ENCODE measurements at regions of chr6 and their contacts with region 1.

Region 1: DNA sequence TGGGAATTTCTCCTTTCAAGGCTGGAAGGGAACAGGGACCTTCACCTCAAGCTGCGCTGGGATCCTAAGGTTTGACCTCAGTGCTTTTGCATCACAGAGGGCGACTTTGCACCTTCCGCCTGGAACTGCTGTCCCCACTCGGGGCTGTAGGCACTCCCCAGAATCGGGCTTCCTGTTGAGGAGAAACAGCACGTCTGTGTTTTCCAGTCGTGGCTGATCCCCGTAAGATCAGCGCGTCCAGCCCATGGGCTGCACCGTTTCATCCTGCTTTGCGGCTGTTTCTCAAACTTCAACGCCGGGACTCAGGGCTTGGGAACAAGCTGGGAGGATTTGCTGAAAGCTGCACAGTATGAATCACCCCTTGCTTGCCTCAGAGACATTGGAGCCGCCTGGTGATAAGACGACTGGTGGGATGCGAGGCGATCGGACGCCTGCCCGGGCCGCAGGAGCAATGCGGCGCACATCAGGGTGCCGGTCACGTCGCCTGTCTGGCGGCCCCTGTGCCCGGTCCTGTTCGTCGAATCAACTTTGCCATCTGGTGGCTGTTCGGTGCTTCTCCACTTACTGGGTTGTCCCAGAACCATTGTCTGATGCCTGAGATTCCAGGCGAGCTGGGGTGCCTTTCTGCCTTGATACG is 53.6 kb upstream of the FRMD1 start:
- DNase-seq: peak; percentile 41 to 87 (median 84)
- H3K4me3 ChIP-seq: peak overlapping the region in 58 of 59 donors; percentile 0 to 69 (median 44)
- H3K27ac ChIP-seq: peak overlapping the region in 20 of 59 donors; percentile 3 to 77 (median 41)
- H3K27me3 ChIP-seq: no peaks in the 10 kb centered on the region
- CTCF ChIP-seq: peak; percentile 51 to 91 (median 78)

Region 2: GRCh38 chr6:167485186-167485978 is 647.3 kb before region 1 on chr6:
- intact Hi-C with region 1: loop called in 1 of 2 experiments (anchors 5 kb)
- DNase-seq: peak in 1 of 10 donors; percentile 53
- H3K4me3 ChIP-seq: no peak overlapping the region
- H3K27ac ChIP-seq: no peak overlapping the region
- H3K27me3 ChIP-seq: peaks cover 0 to 5% (median 0%) of the 10 kb centered on the region in 45 donors
- CTCF ChIP-seq: peak; percentile 28 to 90 (median 70)

Region 3: DNA sequence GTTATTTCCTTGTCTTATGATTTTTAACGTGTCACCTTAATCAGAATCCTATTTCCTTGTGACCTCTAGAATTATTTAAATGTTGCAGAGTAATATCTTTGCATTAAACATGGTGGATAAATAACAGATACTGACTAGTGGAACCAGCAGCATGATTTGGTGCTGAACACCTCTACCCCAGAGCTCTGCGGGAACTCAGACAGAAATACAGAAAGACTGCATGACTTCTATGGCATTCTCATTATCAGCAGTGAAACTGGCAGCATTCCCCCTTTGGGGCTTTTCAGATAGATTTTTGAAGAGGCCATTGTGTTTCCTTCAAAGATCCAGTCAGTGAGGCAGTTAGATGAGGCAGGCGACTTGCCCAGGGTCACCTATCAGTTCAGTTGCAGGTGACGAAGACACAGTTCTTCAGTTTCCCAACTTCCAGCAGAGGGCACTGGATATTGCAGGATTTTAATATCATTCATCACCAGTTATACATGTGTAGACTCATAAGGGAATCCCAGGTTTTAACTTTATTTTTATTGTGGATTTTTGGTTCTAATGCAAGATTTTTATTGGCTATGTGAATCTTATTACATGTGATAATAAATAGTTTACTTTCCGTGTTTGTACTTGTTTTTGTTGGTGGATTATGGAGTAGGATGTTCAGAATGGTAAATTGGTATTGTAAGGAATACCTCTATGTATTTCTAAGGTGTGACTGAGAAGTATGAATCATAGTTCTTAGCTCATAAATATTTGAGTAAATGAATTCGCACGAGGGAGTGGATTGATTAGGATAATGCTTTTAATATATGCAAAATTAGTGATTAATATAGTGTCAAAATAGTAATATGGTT is 224.6 kb before region 1 on chr6:
- intact Hi-C with region 1: loop called (anchors 2 kb)
- DNase-seq: peak in 2 of 10 donors; percentile 33 to 49
- H3K4me3 ChIP-seq: peak overlapping the region in 24 of 59 donors; percentile 5 to 51 (median 41)
- H3K27ac ChIP-seq: peak overlapping the region in 33 of 59 donors; percentile 1 to 75 (median 55)
- H3K27me3 ChIP-seq: no peaks in the 10 kb centered on the region
- CTCF ChIP-seq: peak; percentile 47 to 82 (median 70)

Region 4: DNA sequence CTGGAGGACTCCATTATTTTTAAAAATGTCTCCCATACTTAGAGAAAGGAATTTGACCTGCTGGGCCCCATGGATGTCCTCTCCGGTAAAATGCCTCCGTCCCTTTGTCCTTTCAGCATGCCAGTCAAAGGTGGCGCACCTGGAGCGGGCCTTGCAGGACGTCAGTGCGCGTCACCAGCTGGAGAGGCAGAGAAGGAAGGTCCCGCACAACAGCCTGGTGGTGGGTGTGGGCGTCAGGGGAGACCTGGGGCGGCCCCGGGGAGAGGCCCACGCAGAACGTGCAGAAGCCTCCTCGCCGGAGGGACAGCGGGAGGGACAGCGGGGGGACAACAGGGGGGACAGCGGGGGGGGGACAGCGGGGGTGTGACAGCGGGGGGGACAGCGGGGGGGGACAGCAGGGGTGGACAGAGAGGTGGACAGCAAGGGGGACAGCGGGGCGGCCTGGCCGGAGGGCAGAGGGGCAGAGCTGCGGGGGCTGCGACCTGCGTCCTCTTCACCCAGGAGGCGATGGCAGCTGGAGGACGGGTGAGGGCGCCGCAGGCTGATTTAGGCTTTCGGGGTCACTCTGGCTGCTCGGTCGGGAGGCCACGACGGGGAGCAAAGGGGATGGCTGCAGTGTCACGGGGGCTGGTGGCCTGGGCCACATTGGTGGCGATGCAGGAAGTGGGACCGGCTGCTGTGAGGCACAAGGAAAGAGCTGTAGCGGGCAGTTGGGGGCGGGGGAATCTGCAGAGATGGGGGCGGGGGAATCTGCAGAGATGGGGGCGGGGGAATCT is 136.0 kb before region 1 on chr6:
- intact Hi-C with region 1: loop called in 1 of 2 experiments (anchors 10 kb)
- DNase-seq: peak in 1 of 10 donors; percentile 69
- H3K4me3 ChIP-seq: peak overlapping the region in 3 of 59 donors; percentile 11 to 39 (median 35)
- H3K27ac ChIP-seq: peak overlapping the region in 9 of 59 donors; percentile 4 to 82 (median 59)
- H3K27me3 ChIP-seq: peaks cover 0 to 7% (median 0%) of the 10 kb centered on the region in 45 donors
- CTCF ChIP-seq: peak in 5 of 56 donors; percentile 8 to 33 (median 17)

Region 5: GRCh38 chr6:168045141-168045691 is 87.4 kb before region 1 on chr6:
- intact Hi-C with region 1: loop called in 1 of 2 experiments (anchors 5 kb)
- DNase-seq: peak in 2 of 10 donors; percentile 20 to 37
- H3K4me3 ChIP-seq: no peak overlapping the region
- H3K27ac ChIP-seq: peak overlapping the region in 6 of 59 donors; percentile 10 to 53 (median 20)
- H3K27me3 ChIP-seq: no peaks in the 10 kb centered on the region
- CTCF ChIP-seq: peak in 1 of 56 donors; percentile 5

Region 6: GRCh38 chr6:168060521-168060931 is 72.1 kb before region 1 on chr6:
- intact Hi-C with region 1: loop called (anchors 2 to 5 kb)
- DNase-seq: peak in 9 of 10 donors; percentile 20 to 72 (median 61)
- H3K4me3 ChIP-seq: no peak overlapping the region
- H3K27ac ChIP-seq: peak overlapping the region in 2 of 59 donors; percentile 18
- H3K27me3 ChIP-seq: no peaks in the 10 kb centered on the region
- CTCF ChIP-seq: peak in 51 of 56 donors; percentile 26 to 72 (median 55)

Region 7: GRCh38 chr6:168180548-168181011 is 47.9 kb after region 1 on chr6:
- intact Hi-C with region 1: no loop called
- DNase-seq: peak in 1 of 10 donors; percentile 25
- H3K4me3 ChIP-seq: no peak overlapping the region
- H3K27ac ChIP-seq: no peak overlapping the region
- H3K27me3 ChIP-seq: peaks cover 0 to 8% (median 0%) of the 10 kb centered on the region in 45 donors
- CTCF ChIP-seq: no peak